B cell (primary cell): ENCODE measurements at regions of chr2 and their contacts with region 1.

Region 1: DNA sequence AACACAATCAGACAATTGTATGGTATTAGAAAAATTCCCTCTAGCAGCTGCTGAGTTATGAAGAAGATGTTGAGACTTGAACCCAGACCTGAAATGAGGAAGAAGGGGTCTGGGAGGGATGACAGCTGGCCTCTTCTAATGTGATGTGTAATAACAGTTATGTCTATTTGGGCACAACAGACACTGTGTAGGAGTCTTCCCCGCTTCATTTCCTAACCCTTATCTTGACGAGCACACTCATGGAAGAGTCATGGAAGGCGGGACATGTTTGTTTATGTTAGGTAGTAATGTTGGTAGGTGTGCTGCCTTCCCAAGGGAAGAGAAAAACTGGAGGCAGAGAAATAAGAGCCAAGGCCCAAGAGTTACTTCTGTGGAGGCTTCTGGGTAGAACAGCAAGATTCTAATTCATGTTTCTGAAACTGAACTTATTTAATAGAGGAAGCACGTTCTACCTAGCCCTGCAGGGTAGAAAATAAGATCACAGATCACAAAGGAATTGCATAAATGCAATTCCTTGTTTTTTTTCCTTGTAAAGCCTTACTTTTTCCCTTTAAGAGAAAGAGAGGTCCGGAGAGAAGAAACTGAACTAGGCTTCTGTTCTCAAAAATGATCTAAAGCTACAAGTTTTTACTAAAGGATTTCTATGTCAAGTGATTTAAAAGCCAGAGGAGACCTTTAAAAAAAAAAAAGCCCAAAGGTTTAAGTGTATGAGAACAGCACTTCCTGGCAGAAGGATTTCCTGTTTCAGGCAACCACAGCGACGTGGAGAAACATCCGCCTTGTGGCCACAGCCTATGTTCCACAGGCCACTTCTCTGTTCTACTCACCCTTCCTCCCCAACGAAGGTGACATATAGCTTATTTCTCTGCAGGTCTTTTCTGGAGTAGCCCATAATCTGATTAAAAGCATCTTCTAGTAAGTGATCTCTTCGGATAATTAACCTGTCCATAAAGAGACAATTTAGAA is 68.5 kb upstream of the STK17B start:
- DNase-seq: peak; percentile 90
- ATAC-seq: peak; percentile 68
- H3K4me3 ChIP-seq: peak overlapping the region in 2 of 5 experiments; percentile 23 to 36
- H3K4me3 Mint-ChIP-seq: peak overlapping the region; percentile 74
- H3K27ac ChIP-seq: peak overlapping the region; percentile 91 to 92
- H3K27ac Mint-ChIP-seq: peak overlapping the region; percentile 100
- H3K4me1 ChIP-seq: peaks cover 72 to 84% of the 10 kb centered on the region in 2 donors
- H3K4me1 Mint-ChIP-seq: peaks cover 77% of the 10 kb centered on the region
- H3K27me3 ChIP-seq: no peaks in the 10 kb centered on the region
- H3K27me3 Mint-ChIP-seq: no peaks in the 10 kb centered on the region
- CTCF ChIP-seq: peak; percentile 16

Region 2: DNA sequence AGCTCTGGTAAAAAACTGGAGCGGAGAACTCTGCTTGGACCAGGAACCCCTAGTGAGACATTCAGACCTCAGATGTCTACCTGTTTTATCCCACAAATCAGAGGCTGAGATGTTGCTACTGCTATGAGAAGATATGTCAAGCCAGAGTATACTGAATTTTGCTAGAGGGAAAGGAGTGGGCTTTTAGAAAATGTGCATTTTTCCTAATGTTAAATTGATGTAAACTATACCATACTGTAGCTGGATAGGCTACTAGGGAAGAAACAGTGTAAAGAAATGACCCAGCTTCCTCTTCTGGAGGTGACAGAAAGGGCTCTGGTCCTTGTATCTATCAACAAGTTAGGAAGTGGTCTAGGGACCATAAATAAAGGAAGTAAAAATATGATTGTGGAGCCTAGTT is 517.8 kb before region 1 on chr2:
- CTCF ChIA-PET with region 1: no interaction called
- POLR2A ChIA-PET with region 1: no interaction called
- intact Hi-C with region 1: no loop called
- DNase-seq: no peak
- ATAC-seq: no peak
- H3K4me3 ChIP-seq: no peak overlapping the region
- H3K4me3 Mint-ChIP-seq: no peak overlapping the region
- H3K27ac ChIP-seq: no peak overlapping the region
- H3K27ac Mint-ChIP-seq: no peak overlapping the region
- H3K4me1 ChIP-seq: no peaks in the 10 kb centered on the region
- H3K4me1 Mint-ChIP-seq: no peaks in the 10 kb centered on the region
- H3K27me3 ChIP-seq: no peaks in the 10 kb centered on the region
- H3K27me3 Mint-ChIP-seq: no peaks in the 10 kb centered on the region
- CTCF ChIP-seq: no peak

Region 3: DNA sequence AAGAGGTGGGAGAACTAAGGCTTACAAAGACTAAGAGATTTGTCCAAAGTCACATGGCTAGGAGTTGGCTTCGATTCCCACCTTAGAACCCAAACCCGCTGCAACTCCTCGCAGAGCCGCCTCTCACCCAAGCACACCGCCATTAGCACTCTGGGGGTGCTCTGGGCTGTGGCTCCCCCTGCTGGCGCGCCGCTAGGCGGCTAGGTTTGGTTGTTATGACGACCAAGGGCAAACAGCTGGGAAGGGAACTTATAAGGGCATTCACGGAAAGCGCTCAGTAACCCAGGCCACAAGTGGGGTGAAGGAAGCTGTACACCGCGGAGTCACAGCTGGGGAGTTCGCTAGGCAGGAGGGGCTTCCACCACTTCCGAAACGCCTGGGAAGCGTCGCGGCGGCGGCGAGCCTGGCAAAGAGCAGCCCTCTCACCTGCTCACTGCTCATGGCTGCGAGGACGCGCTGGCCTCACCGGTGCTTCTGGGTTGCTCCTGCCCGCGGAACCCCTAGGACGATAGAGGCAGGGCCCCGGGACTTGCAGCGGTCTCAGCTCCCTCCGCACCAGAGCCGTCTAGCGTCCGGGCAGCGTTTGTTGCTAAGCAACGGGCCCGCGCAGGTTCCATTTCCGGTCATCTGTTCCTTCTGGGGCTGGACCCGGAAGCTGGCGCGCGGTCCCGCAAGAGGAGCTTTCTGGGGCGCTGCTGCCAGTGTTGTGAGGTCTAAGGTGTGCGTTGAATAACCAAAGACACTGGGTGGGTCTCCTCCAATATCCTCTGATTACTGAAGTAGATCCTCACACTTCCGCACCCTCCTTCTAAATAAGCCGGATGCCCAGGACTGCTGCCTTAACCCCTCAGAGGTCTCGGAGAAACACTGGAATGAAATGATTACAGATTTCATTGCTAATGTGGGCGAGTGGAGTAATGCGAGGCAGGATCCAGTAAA is 171.4 kb before region 1 on chr2 and contains the start of gene DNAH7:
- CTCF ChIA-PET with region 1: no interaction called
- POLR2A ChIA-PET with region 1: no interaction called
- intact Hi-C with region 1: loop called (anchors 1 kb)
- DNase-seq: peak; percentile 96
- ATAC-seq: peak; percentile 92
- H3K4me3 ChIP-seq: peak within 1 kb of the TSS; percentile 46 to 81 (median 64)
- H3K4me3 Mint-ChIP-seq: peak within 1 kb of the TSS; percentile 96
- H3K27ac ChIP-seq: peak within 1 kb of the TSS; percentile 30 to 73
- H3K27ac Mint-ChIP-seq: peak within 1 kb of the TSS; percentile 93
- H3K4me1 ChIP-seq: peaks cover 12 to 13% of the 10 kb centered on the region in 2 donors
- H3K4me1 Mint-ChIP-seq: peaks cover 15% of the 10 kb centered on the region
- H3K27me3 ChIP-seq: no peaks in the 10 kb centered on the region
- H3K27me3 Mint-ChIP-seq: peaks cover 2% of the 10 kb centered on the region
- CTCF ChIP-seq: peak; percentile 97
- total RNA-seq, gene DNAH7: 0.05 TPM in 1 of 2 replicates, not detected in the other

Region 4: DNA sequence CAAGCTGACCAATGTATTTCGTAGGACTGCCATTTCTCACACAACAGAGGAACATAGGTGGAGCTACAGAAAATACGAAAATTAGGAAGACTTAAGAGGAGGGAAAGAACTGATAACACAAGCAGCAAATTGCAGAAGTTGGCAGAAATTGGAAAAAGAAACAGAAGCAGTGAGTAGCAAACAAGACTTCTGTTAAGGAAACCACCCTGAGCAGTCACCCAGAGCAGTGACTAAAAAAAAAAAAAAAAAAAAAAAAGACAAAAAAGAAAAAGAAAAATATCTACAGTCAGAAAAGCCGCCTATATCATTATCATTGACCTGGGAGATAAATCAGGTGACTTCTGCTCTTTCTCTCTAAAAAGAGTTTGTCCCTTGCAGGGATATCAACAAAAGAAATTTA is 90.0 kb before region 1 on chr2:
- CTCF ChIA-PET with region 1: interaction called, 3 read pairs
- POLR2A ChIA-PET with region 1: interaction called, 18 read pairs
- intact Hi-C with region 1: loop called (anchors 1 kb)
- DNase-seq: peak; percentile 83
- ATAC-seq: peak; percentile 80
- H3K4me3 ChIP-seq: peak overlapping the region in 2 of 5 experiments; percentile 11 to 52
- H3K4me3 Mint-ChIP-seq: peak overlapping the region; percentile 86
- H3K27ac ChIP-seq: peak overlapping the region; percentile 71 to 90
- H3K27ac Mint-ChIP-seq: peak overlapping the region; percentile 97
- H3K4me1 ChIP-seq: peaks cover 37 to 55% of the 10 kb centered on the region in 2 donors
- H3K4me1 Mint-ChIP-seq: peaks cover 65% of the 10 kb centered on the region
- H3K27me3 ChIP-seq: no peaks in the 10 kb centered on the region
- H3K27me3 Mint-ChIP-seq: no peaks in the 10 kb centered on the region
- CTCF ChIP-seq: no peak

Region 5: GRCh38 chr2:196160101-196160500 is 79.8 kb before region 1 on chr2:
- CTCF ChIA-PET with region 1: interaction called, 9 read pairs
- POLR2A ChIA-PET with region 1: interaction called, 4 read pairs
- intact Hi-C with region 1: loop called (anchors 1 kb)
- DNase-seq: peak; percentile 92
- ATAC-seq: peak; percentile 82
- H3K4me3 ChIP-seq: peak overlapping the region in 3 of 5 experiments; percentile 8 to 65 (median 13)
- H3K4me3 Mint-ChIP-seq: peak overlapping the region; percentile 56
- H3K27ac ChIP-seq: peak overlapping the region; percentile 47 to 96
- H3K27ac Mint-ChIP-seq: peak overlapping the region; percentile 82
- H3K4me1 ChIP-seq: peaks cover 56 to 93% of the 10 kb centered on the region in 2 donors
- H3K4me1 Mint-ChIP-seq: peaks cover 66% of the 10 kb centered on the region
- H3K27me3 ChIP-seq: no peaks in the 10 kb centered on the region
- H3K27me3 Mint-ChIP-seq: no peaks in the 10 kb centered on the region
- CTCF ChIP-seq: no peak

Region 6: DNA sequence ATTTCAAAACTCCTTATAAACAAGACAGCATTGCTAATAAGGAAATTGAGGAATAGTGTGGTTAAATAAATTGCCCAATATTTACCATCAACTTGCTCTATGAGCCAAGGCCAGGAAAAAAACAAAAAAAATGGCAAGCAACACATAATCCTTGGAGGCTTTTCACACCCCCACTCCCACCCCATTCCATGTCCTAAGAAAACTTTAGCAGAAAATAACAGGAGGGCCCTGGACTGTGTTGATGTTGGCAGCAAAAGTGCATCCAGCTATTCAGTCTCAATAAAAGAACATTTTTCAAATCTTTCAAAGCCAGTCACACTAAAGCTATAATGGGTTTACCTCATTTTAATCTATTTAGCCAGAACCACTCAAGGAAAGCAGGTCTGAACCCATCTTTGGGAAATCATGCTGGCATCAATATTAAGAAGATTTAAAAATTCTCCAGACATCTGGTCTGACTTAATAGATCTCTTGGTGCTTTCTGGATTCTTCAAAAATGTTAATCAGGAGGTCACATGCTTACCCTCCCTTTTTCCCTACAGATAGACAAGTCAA is 33.9 kb before region 1 on chr2:
- CTCF ChIA-PET with region 1: interaction called, 6 read pairs
- POLR2A ChIA-PET with region 1: interaction called, 6 read pairs
- intact Hi-C with region 1: loop called (anchors 1 kb)
- DNase-seq: no peak
- ATAC-seq: no peak
- H3K4me3 ChIP-seq: no peak overlapping the region
- H3K4me3 Mint-ChIP-seq: no peak overlapping the region
- H3K27ac ChIP-seq: no peak overlapping the region
- H3K27ac Mint-ChIP-seq: no peak overlapping the region
- H3K4me1 ChIP-seq: peaks cover 18 to 20% of the 10 kb centered on the region in 2 donors
- H3K4me1 Mint-ChIP-seq: peaks cover 48% of the 10 kb centered on the region
- H3K27me3 ChIP-seq: no peaks in the 10 kb centered on the region
- H3K27me3 Mint-ChIP-seq: no peaks in the 10 kb centered on the region
- CTCF ChIP-seq: no peak

Region 7: DNA sequence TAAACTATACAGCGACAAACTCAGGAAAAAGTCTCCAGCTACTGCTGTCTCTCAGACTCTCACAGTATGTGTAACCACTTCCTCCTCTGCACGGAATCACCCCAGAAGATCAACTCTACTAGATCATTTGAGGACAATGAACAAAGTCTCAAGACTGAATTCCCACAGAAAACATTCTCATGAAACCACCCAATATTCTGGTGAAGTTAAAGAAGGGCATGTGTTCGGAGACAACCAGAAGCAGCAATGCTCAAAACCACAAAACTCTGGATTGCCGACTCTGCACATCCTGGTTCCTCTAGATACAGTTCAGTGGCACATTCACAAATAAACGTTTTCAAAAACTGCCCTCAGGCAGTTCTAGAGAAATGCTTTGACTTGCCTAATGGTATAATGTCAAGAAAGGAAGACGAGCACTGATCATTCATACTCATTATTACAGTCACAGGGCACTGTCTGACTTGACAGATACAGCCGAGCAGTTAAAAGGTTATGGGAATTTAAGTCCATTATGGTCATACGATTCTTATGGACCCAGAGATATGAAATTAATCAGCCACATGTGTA is 23.4 kb after region 1 on chr2:
- CTCF ChIA-PET with region 1: interaction called, 4 read pairs
- POLR2A ChIA-PET with region 1: interaction called, 5 read pairs
- intact Hi-C with region 1: loop called (anchors 1 kb)
- DNase-seq: peak; percentile 74
- ATAC-seq: peak; percentile 84
- H3K4me3 ChIP-seq: peak overlapping the region in 4 of 5 experiments; percentile 21 to 36 (median 24)
- H3K4me3 Mint-ChIP-seq: peak overlapping the region; percentile 78
- H3K27ac ChIP-seq: peak overlapping the region; percentile 67 to 89
- H3K27ac Mint-ChIP-seq: peak overlapping the region; percentile 92
- H3K4me1 ChIP-seq: peaks cover 57 to 72% of the 10 kb centered on the region in 2 donors
- H3K4me1 Mint-ChIP-seq: peaks cover 71% of the 10 kb centered on the region
- H3K27me3 ChIP-seq: no peaks in the 10 kb centered on the region
- H3K27me3 Mint-ChIP-seq: no peaks in the 10 kb centered on the region
- CTCF ChIP-seq: no peak

Region 8: GRCh38 chr2:196268538-196269338 is 28.8 kb after region 1 on chr2:
- CTCF ChIA-PET with region 1: interaction called, 71 read pairs
- POLR2A ChIA-PET with region 1: no interaction called
- intact Hi-C with region 1: loop called (anchors 1 kb)
- DNase-seq: peak; percentile 78
- ATAC-seq: peak; percentile 68
- H3K4me3 ChIP-seq: peak overlapping the region in 4 of 5 experiments; percentile 19 to 59 (median 31)
- H3K4me3 Mint-ChIP-seq: peak overlapping the region; percentile 75
- H3K27ac ChIP-seq: peak overlapping the region; percentile 74 to 90
- H3K27ac Mint-ChIP-seq: peak overlapping the region; percentile 95
- H3K4me1 ChIP-seq: peaks cover 35 to 57% of the 10 kb centered on the region in 2 donors
- H3K4me1 Mint-ChIP-seq: peaks cover 51% of the 10 kb centered on the region
- H3K27me3 ChIP-seq: no peaks in the 10 kb centered on the region
- H3K27me3 Mint-ChIP-seq: no peaks in the 10 kb centered on the region
- CTCF ChIP-seq: no peak